SK-N-SH (cell line): ENCODE measurements at regions of chr5 and their contacts with region 1.

Region 1: GRCh38 chr5:153496835-153497234 is 6.4 kb downstream of the GRIA1 start:
- DNase-seq: peak; percentile 35
- H3K4me3 ChIP-seq: no peak overlapping the region
- H3K27ac ChIP-seq: no peak overlapping the region
- H3K4me1 ChIP-seq: no peaks in the 10 kb centered on the region
- H3K27me3 ChIP-seq: no peaks in the 10 kb centered on the region
- CTCF ChIP-seq: peak; percentile 88
- EP300 ChIP-seq: no peak
- RAD21 ChIP-seq: peak; percentile 92

Region 2: GRCh38 chr5:153308282-153308681 is 188.6 kb before region 1 on chr5:
- CTCF ChIA-PET with region 1: no interaction called
- POLR2A ChIA-PET with region 1: no interaction called
- DNase-seq: no peak
- H3K4me3 ChIP-seq: no peak overlapping the region
- H3K27ac ChIP-seq: no peak overlapping the region
- H3K4me1 ChIP-seq: no peaks in the 10 kb centered on the region
- H3K27me3 ChIP-seq: no peaks in the 10 kb centered on the region
- CTCF ChIP-seq: no peak
- EP300 ChIP-seq: no peak
- RAD21 ChIP-seq: no peak

Region 3: DNA sequence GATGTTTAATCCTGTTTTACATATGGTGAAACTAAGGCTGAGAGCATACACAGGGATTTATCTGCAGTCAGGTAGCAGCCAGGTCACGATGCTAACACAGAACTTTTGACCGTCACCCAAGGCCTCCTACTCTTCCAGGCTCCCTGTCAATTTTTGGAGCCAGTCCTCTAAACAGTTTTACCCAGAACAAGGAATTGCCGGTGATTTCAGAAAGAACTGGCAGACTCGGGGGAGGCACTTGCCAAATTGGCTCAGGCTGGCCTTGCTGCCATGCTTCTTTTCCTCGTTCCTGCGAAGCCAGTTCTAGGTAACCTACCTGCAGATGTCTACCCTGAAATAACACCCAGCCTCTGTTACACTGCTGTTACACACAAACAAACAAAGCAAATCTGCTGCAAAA is 14.8 kb after region 1 on chr5:
- CTCF ChIA-PET with region 1: no interaction called
- POLR2A ChIA-PET with region 1: no interaction called
- DNase-seq: no peak
- H3K4me3 ChIP-seq: no peak overlapping the region
- H3K27ac ChIP-seq: no peak overlapping the region
- H3K4me1 ChIP-seq: peaks cover 0 to 2% of the 10 kb centered on the region in 2 experiments; a peak in 2 of 4 replicates
- H3K27me3 ChIP-seq: no peaks in the 10 kb centered on the region
- CTCF ChIP-seq: no peak
- EP300 ChIP-seq: no peak
- RAD21 ChIP-seq: no peak

Region 4: GRCh38 chr5:153905219-153905618 is 408.4 kb after region 1 on chr5:
- CTCF ChIA-PET with region 1: interaction called, 20 read pairs
- POLR2A ChIA-PET with region 1: no interaction called
- DNase-seq: no peak
- H3K4me3 ChIP-seq: no peak overlapping the region
- H3K27ac ChIP-seq: no peak overlapping the region
- H3K4me1 ChIP-seq: peaks cover 0 to 7% of the 10 kb centered on the region in 2 experiments; a peak in 1 of 4 replicates
- H3K27me3 ChIP-seq: no peaks in the 10 kb centered on the region
- CTCF ChIP-seq: peak; percentile 44
- EP300 ChIP-seq: no peak
- RAD21 ChIP-seq: peak; percentile 70